ENCODE measurements at regions of chrX and their contacts with region 1.

Region 1: GRCh38 chrX:13750204-13750603 is 15.7 kb downstream of the OFD1 start:
- DNase-seq: peak; percentile 37 to 53 (median 48)
- H3K4me3 ChIP-seq: no peak overlapping the region
- H3K4me3 Mint-ChIP-seq: no peak overlapping the region
- H3K27ac ChIP-seq: no peak overlapping the region
- H3K27ac Mint-ChIP-seq: peak overlapping the region; percentile 29 to 85 (median 65)
- H3K4me1 ChIP-seq: peaks cover 20% of the 10 kb centered on the region
- H3K4me1 Mint-ChIP-seq: peaks cover 16 to 28% (median 21%) of the 10 kb centered on the region in 4 donors
- H3K27me3 ChIP-seq: no peaks in the 10 kb centered on the region
- H3K27me3 Mint-ChIP-seq: no peaks in the 10 kb centered on the region

Region 2: GRCh38 chrX:13506574-13506973 is 243.6 kb before region 1 on chrX:
- CTCF ChIA-PET with region 1: interaction called, 11 read pairs
- POLR2A ChIA-PET with region 1: no interaction called
- intact Hi-C with region 1: loop called (anchors 5 kb)
- DNase-seq: peak; percentile 40 to 45 (median 41)
- H3K4me3 ChIP-seq: no peak overlapping the region
- H3K4me3 Mint-ChIP-seq: no peak overlapping the region
- H3K27ac ChIP-seq: no peak overlapping the region
- H3K27ac Mint-ChIP-seq: no peak overlapping the region
- H3K4me1 ChIP-seq: no peaks in the 10 kb centered on the region
- H3K4me1 Mint-ChIP-seq: peaks cover 0 to 5% (median 0%) of the 10 kb centered on the region in 4 donors
- H3K27me3 ChIP-seq: no peaks in the 10 kb centered on the region
- H3K27me3 Mint-ChIP-seq: peaks cover 0 to 2% of the 10 kb centered on the region in 2 donors

Region 3: GRCh38 chrX:13620207-13620606 is 130.0 kb before region 1 on chrX:
- CTCF ChIA-PET with region 1: no interaction called
- POLR2A ChIA-PET with region 1: no interaction called
- intact Hi-C with region 1: no loop called
- DNase-seq: no peak
- H3K4me3 ChIP-seq: no peak overlapping the region
- H3K4me3 Mint-ChIP-seq: no peak overlapping the region
- H3K27ac ChIP-seq: no peak overlapping the region
- H3K27ac Mint-ChIP-seq: no peak overlapping the region
- H3K4me1 ChIP-seq: no peaks in the 10 kb centered on the region
- H3K4me1 Mint-ChIP-seq: no peaks in the 10 kb centered on the region
- H3K27me3 ChIP-seq: no peaks in the 10 kb centered on the region
- H3K27me3 Mint-ChIP-seq: peaks cover 0 to 1% of the 10 kb centered on the region in 2 donors

Region 4: DNA sequence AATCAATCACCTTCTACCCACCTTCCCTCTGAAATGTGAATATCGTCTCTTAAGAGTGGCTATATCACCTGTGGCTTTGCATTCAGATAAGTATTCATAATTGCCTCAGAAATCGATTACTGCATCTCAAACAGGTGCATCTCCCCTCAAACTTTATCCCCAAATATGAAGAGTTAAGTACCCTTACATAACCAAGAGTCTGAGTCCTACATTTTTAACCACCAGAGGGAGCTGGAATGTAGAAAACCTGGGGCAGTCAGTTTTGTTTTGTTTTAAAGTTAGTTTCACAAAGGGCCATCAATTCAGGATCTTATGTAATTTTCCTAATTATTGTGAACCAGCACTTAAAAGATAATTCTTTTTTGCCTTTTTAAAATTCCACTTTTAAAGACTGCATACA is 91.6 kb before region 1 on chrX:
- CTCF ChIA-PET with region 1: interaction called, 8 read pairs
- POLR2A ChIA-PET with region 1: interaction called, 5 read pairs
- intact Hi-C with region 1: loop called (anchors 1 kb)
- DNase-seq: peak in 4 of 5 donors; percentile 59 to 69 (median 64)
- H3K4me3 ChIP-seq: no peak overlapping the region
- H3K4me3 Mint-ChIP-seq: peak overlapping the region in 3 of 8 donors; percentile 0 to 59 (median 5)
- H3K27ac ChIP-seq: no peak overlapping the region
- H3K27ac Mint-ChIP-seq: peak overlapping the region; percentile 56 to 85 (median 76)
- H3K4me1 ChIP-seq: peaks cover 27% of the 10 kb centered on the region
- H3K4me1 Mint-ChIP-seq: peaks cover 19 to 26% (median 22%) of the 10 kb centered on the region in 4 donors
- H3K27me3 ChIP-seq: no peaks in the 10 kb centered on the region
- H3K27me3 Mint-ChIP-seq: no peaks in the 10 kb centered on the region

Region 5: GRCh38 chrX:13816643-13817627 is 66.7 kb after region 1 on chrX and contains the start of gene GPM6B:
- CTCF ChIA-PET with region 1: no interaction called
- POLR2A ChIA-PET with region 1: no interaction called
- intact Hi-C with region 1: no loop called
- DNase-seq: no peak
- H3K4me3 ChIP-seq: no peak within 1 kb of the TSS
- H3K4me3 Mint-ChIP-seq: no peak within 1 kb of the TSS
- H3K27ac ChIP-seq: no peak within 1 kb of the TSS
- H3K27ac Mint-ChIP-seq: no peak within 1 kb of the TSS
- H3K4me1 ChIP-seq: no peaks in the 10 kb centered on the region
- H3K4me1 Mint-ChIP-seq: no peaks in the 10 kb centered on the region
- H3K27me3 ChIP-seq: no peaks in the 10 kb centered on the region
- H3K27me3 Mint-ChIP-seq: peaks cover 9 to 19% of the 10 kb centered on the region in 2 donors
- total RNA-seq, gene GPM6B: not detected

Region 6: DNA sequence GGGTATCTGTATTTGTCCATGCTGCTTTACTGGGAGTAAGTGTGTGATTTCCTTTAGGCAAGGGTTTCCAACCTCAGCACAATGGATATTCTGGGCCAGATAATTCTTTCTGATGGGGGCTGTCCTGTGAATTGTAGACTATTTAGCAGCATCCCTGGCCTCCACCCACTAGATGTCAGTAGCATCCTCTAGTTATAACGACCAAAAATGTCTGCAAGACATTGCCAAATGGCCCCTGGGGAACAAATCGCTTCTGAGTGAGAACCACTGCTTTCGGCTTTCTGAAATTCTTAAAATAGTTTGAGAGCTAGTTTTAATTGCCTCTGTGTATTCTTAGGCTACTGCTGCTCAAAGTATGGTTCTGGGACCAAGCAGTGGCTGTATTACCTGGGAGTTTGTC is 147.9 kb after region 1 on chrX:
- CTCF ChIA-PET with region 1: no interaction called
- POLR2A ChIA-PET with region 1: no interaction called
- intact Hi-C with region 1: no loop called
- DNase-seq: no peak
- H3K4me3 ChIP-seq: no peak overlapping the region
- H3K4me3 Mint-ChIP-seq: no peak overlapping the region
- H3K27ac ChIP-seq: no peak overlapping the region
- H3K27ac Mint-ChIP-seq: no peak overlapping the region
- H3K4me1 ChIP-seq: no peaks in the 10 kb centered on the region
- H3K4me1 Mint-ChIP-seq: no peaks in the 10 kb centered on the region
- H3K27me3 ChIP-seq: no peaks in the 10 kb centered on the region
- H3K27me3 Mint-ChIP-seq: peaks cover 0 to 1% of the 10 kb centered on the region in 2 donors

Measured in CD4-positive, alpha-beta memory T cell (primary cell).